ENCODE measurements at regions of chr5 and their contacts with region 1.

Region 1: GRCh38 chr5:59188419-59189225 is 605.7 kb downstream of the RAB3C start:
- DNase-seq: peak; percentile 69 to 86 (median 84)
- H3K4me3 ChIP-seq: peak overlapping the region in 5 of 7 experiments; percentile 30 to 70 (median 52)
- H3K27ac ChIP-seq: no peak overlapping the region
- H3K4me1 ChIP-seq: peaks cover 0 to 5% (median 2%) of the 10 kb centered on the region in 4 experiments
- H3K27me3 ChIP-seq: no peaks in the 10 kb centered on the region

Region 2: DNA sequence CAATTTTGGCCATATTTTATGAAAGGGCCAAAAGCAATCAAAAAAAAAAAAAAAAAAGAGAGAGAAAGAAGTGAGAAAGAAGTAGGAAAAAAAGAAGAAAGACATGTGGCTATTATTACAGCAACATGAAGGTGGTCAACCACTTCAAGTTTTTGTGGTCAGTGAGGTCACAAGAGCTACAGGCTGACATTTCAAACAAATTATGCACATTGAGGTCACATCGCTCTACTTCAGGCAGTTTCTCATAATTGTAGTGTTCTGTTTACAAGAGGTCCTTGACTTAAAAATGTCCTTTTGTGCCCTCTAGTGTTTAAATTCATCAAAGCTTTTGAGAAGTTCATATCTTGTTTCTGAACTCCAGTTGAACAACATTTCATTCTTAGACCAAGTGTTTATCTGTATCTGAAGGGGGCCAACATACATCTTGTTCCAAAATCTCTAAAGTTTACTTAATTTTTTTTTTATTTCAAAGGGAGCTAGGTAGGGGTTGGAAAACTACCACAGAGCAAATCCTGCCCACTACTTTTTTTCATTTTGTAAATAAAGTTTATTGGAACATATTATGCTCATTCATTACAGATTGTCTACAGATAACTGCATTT is 191.8 kb after region 1 on chr5:
- CTCF ChIA-PET with region 1: interaction called, 47 read pairs
- POLR2A ChIA-PET with region 1: no interaction called
- DNase-seq: peak; percentile 75 to 94 (median 90)
- H3K4me3 ChIP-seq: no peak overlapping the region
- H3K27ac ChIP-seq: no peak overlapping the region
- H3K4me1 ChIP-seq: peaks cover 0 to 14% (median 1%) of the 10 kb centered on the region in 4 experiments
- H3K27me3 ChIP-seq: no peaks in the 10 kb centered on the region